ENCODE measurements at regions of chr3 and their contacts with region 1.

Region 1: GRCh38 chr3:48088749-48089466 is 72.7 kb upstream of the MAP4 start:
- DNase-seq: peak; percentile 98
- H3K4me3 Mint-ChIP-seq: peak overlapping the region; percentile 95
- H3K27ac Mint-ChIP-seq: peak overlapping the region; percentile 98
- H3K4me1 Mint-ChIP-seq: peaks cover 25% of the 10 kb centered on the region
- H3K27me3 Mint-ChIP-seq: peaks cover 7% of the 10 kb centered on the region

Region 2: GRCh38 chr3:47282424-47283192 is 806.3 kb before region 1 on chr3 and contains the starts of genes KIF9 and KLHL18:
- intact Hi-C with region 1: loop called (anchors 2 kb)
- DNase-seq: peak; percentile 98
- H3K4me3 Mint-ChIP-seq: peak within 1 kb of the TSS; percentile 100
- H3K27ac Mint-ChIP-seq: peak within 1 kb of the TSS; percentile 100
- H3K4me1 Mint-ChIP-seq: peaks cover 29% of the 10 kb centered on the region
- H3K27me3 Mint-ChIP-seq: peaks cover 3% of the 10 kb centered on the region
- total RNA-seq, gene KIF9: 3.0 and 3.6 TPM in 2 replicates
- total RNA-seq, gene KLHL18: 47.0 and 49.3 TPM in 2 replicates

Region 3: DNA sequence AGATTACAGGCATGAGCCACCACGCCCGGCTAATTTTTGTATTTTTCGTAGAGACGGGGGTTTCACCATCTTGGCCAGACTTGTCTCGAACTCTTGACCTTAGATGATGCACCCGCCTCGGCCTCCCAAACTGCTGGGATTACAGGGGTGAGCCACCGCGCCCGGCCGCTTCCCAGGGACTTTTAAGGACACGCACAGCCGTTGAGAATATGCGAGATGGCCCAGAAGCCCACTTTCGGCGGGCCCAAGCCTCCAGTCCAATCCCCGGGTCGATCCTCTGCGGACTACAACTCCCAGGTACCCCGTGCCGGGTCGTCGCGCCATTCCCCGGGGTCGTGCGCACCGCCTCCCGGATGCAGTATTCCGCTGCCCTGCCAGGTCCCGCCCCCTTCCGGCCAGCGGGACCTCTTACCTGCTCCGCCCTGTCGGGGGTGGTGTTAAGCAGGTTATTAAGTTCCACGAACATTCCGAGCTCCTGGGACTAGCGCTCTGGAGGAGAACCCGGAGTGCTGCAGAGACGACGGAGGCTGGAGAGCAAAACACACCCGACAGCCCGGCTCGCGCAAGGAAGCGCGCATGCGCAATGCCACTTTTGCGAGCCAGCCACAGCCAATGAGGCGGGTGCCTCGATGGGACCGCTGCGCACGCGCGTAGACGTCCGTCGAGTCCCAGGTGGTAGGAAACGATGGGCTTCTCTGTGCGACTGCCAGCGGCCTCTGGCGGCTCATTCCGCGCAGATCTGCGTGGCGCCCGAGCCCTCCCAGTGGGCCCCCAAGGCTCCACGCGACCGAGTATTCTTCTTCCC is 575.6 kb before region 1 on chr3 and contains the start of gene ELP6:
- intact Hi-C with region 1: loop called (anchors 2 kb)
- DNase-seq: peak; percentile 99
- H3K4me3 Mint-ChIP-seq: peak within 1 kb of the TSS; percentile 98
- H3K27ac Mint-ChIP-seq: peak within 1 kb of the TSS; percentile 98
- H3K4me1 Mint-ChIP-seq: peaks cover 17% of the 10 kb centered on the region
- H3K27me3 Mint-ChIP-seq: peaks cover 13% of the 10 kb centered on the region
- total RNA-seq, gene ELP6: 45.9 and 49.7 TPM in 2 replicates

Region 4: DNA sequence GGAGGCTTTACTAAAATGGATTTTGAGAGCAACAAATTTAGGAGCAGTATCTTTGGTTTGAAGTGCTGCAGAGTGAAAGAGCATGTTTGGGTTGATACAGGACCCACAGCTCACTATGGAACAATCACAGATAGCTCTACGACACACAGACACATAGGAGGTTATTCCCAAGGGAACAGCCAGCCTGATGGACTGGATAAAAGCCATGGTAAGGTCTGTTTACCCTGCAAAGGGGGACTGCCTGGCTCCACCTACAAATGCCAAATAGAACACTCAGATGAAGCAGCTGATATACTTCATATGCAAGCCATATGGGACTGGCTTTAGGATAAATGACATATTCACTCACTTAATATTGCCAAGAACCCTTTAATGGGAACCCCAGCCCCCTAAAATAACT is 23.9 kb after region 1 on chr3:
- intact Hi-C with region 1: loop called (anchors 1 kb)
- DNase-seq: no peak
- H3K4me3 Mint-ChIP-seq: peak overlapping the region; percentile 6
- H3K27ac Mint-ChIP-seq: peak overlapping the region; percentile 35
- H3K4me1 Mint-ChIP-seq: peaks cover 12% of the 10 kb centered on the region
- H3K27me3 Mint-ChIP-seq: no peaks in the 10 kb centered on the region

Region 5: DNA sequence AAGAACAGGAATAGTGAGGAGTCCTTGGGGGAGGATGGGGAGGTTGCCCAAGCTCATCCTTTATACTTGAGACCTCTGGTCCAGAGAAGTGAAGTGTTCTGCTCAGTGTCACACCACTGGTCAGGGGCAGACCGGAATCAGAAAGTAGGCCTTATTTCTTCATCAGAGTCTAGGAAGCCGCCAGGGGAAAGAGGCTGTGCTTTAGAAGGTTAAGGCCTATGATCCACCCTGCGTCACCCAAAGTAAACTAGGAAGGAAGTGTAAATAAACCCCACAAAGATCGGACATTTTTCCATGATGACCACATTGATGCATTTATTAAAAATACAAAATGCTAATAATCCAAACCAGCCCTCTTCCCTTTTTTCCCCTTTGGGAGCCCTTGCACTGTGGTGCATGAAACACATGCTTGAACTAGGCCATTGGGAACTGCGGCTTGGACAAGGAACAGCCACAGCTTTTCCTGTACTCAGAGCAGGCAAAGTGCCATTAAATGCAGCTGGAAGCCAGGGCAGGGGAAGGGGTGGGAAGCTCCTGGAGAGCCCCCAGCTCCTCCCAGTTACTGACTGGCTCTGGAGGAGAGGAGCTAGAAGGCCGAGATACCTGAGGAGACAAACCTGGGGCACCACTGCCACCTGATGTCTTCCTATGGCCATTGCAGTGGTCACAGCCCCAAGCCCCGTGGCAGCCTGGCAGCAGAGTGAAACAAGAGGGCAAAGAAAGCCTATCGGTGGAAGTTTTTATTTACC is 62.3 kb after region 1 on chr3:
- intact Hi-C with region 1: loop called (anchors 2 kb)
- DNase-seq: peak; percentile 90
- H3K4me3 Mint-ChIP-seq: no peak overlapping the region
- H3K27ac Mint-ChIP-seq: no peak overlapping the region
- H3K4me1 Mint-ChIP-seq: peaks cover 4% of the 10 kb centered on the region
- H3K27me3 Mint-ChIP-seq: no peaks in the 10 kb centered on the region

Region 6: GRCh38 chr3:48465531-48466378 is 376.8 kb after region 1 on chr3:
- intact Hi-C with region 1: loop called (anchors 10 kb)
- DNase-seq: peak; percentile 95
- H3K4me3 Mint-ChIP-seq: peak overlapping the region; percentile 96
- H3K27ac Mint-ChIP-seq: peak overlapping the region; percentile 93
- H3K4me1 Mint-ChIP-seq: peaks cover 46% of the 10 kb centered on the region
- H3K27me3 Mint-ChIP-seq: no peaks in the 10 kb centered on the region